Activated CD4-positive, alpha-beta T cell treated with anti-CD3 and anti-CD28 coated beads, Interleukin-2, amount 10 ng/mL, durations not matched to agents 24 days and 14 days (primary cell): ENCODE measurements at regions of chr19 and their contacts with region 1.

Region 1: DNA sequence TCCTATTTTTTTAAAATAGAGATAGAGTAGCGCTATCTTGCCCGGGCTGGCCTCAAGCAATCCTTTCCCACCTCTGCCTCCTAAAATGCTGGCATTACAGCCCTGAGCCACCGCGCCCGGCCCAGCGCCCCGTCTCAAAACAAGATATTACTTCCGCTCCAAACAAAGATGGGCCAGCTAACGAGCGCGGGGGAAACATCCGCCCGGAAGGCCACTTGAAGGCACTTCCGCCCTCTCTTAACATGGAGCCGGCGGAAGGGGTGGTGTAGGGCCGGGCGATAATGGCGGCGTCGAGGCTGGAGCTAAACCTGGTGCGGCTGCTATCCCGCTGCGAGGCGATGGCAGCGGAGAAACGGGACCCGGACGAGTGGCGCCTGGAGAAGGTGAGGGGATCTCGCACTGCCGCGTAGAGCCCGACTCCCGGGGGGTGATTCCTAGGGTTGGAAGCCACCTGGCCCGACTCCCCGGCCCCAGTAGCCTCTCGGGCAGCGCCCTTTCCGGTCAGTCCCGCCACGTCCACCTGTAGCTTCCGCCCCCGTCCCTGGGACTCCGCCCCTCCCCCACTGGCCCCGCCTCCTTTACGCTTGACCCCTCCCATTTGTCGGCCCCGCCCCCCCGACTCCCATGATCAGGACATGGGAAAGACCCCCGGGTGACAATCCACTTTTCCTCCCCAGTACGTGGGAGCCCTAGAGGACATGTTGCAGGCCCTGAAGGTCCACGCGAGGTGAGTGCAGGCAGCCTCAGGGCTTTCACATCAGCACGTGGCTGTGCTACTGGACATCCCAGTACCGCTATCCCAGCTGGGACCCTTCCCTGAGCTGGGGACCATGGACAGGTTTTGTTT is at the start of gene USE1:
- DNase-seq: peak; percentile 96
- H3K4me3 Mint-ChIP-seq: peak within 1 kb of the TSS; percentile 86
- H3K27ac Mint-ChIP-seq: peak within 1 kb of the TSS; percentile 97
- H3K4me1 Mint-ChIP-seq: peaks cover 10% of the 10 kb centered on the region
- H3K27me3 Mint-ChIP-seq: no peaks in the 10 kb centered on the region
- total RNA-seq, gene USE1: 29.8 and 31.3 TPM in 2 replicates

Region 2: DNA sequence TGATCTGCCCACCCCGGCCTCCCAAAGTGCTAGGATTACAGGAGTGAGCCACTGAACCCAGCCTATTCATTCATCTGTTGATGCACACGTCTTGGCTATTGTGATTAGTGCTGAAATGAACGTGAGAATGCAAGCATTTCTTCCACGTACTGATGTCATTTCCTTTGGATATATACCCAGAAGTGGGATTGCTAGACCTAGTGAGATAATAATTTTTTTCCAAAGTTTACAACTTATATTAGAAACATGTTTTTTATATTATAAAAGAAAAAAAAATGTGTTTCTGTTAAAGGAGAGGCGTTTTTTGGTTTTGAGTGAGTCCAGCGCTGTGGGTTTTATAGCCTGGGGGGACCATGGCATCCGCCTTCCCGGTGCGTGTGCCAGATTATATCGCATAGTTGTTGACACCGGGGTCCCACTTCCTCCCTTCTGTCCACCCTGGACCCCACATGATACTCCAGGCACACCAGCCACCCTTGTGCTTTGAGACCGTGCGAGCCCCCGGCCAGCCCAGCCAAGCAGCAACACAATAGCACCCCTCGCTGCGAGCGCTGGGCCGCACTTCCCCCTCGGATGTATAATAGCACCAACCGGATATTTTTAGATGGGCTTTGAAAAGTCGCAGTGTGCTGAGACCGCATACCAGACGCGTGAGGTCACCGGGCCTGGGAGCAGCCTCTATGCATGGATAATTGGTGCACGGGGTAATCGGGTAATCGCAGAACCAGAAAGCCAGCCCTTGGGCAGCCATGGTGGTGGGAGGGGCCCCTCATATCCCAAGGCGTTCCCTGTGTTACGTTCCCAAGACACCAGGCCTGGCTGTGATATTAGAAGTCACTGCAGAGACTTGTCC is 80.1 kb before region 1 on chr19:
- intact Hi-C with region 1: no loop called
- DNase-seq: peak; percentile 61
- H3K4me3 Mint-ChIP-seq: peak overlapping the region; percentile 34
- H3K27ac Mint-ChIP-seq: peak overlapping the region; percentile 68
- H3K4me1 Mint-ChIP-seq: peaks cover 13% of the 10 kb centered on the region
- H3K27me3 Mint-ChIP-seq: no peaks in the 10 kb centered on the region

Region 3: GRCh38 chr19:17201913-17202648 is 13.3 kb before region 1 on chr19:
- intact Hi-C with region 1: no loop called
- DNase-seq: no peak
- H3K4me3 Mint-ChIP-seq: no peak overlapping the region
- H3K27ac Mint-ChIP-seq: no peak overlapping the region
- H3K4me1 Mint-ChIP-seq: no peaks in the 10 kb centered on the region
- H3K27me3 Mint-ChIP-seq: no peaks in the 10 kb centered on the region

Region 4: DNA sequence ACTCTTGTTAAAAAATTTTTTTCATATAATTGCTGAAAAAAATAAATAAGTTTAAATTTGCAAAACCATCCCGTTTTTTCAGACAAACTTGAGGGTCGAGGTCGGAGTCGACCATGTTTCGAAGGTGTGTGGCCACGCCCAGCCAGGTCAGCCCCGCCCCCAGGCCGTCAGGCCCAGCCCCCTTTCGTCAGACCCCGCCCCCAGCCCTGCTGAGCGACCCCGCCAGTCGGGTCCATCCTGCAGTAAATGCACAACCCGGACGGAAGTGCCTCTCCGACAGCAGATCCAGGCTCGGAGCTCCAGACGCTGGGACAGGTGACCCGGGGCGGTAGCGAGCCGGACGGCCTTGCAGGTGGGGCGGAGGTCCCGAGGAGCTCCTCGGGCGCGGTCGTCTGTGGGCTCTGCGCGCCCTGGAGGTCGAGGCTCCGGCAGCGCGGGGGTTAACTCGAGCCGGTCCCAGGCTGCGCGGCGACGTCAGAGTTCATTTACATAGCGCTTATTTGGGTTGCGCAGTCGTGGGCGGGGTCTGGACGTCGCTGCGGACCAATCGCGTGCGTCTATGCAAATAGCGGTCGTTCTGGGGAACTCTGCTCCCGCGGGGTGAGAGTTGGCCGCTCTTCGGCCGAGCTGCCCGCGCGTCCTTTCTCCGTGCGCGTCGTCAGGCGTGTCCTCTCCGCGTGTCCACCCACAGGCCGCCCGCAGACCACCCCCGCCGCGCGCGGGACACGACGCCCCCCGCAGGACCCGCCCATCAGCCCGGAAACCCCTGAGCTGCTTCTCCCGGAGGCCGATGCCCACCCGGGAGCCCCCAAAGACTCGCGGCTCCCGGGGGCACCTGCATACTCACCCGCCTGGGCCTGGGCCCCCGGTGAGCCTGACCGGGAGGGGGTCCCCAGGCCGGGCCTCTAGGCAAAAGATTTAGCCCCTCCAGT is 10.9 kb after region 1 on chr19 and contains the start of gene OCEL1:
- intact Hi-C with region 1: loop called (anchors 1 kb)
- DNase-seq: peak; percentile 99
- H3K4me3 Mint-ChIP-seq: peak within 1 kb of the TSS; percentile 95
- H3K27ac Mint-ChIP-seq: peak within 1 kb of the TSS; percentile 99
- H3K4me1 Mint-ChIP-seq: peaks cover 3% of the 10 kb centered on the region
- H3K27me3 Mint-ChIP-seq: no peaks in the 10 kb centered on the region
- total RNA-seq, gene OCEL1: 17.8 and 23.0 TPM in 2 replicates

Region 5: GRCh38 chr19:17266975-17267788 is 51.8 kb after region 1 on chr19 and contains the start of gene BABAM1:
- intact Hi-C with region 1: loop called (anchors 2 kb)
- DNase-seq: peak; percentile 98
- H3K4me3 Mint-ChIP-seq: peak within 1 kb of the TSS; percentile 95
- H3K27ac Mint-ChIP-seq: peak within 1 kb of the TSS; percentile 79
- H3K4me1 Mint-ChIP-seq: peaks cover 14% of the 10 kb centered on the region
- H3K27me3 Mint-ChIP-seq: no peaks in the 10 kb centered on the region
- total RNA-seq, gene BABAM1: 127 TPM in 2 replicates